Activated CD4-positive, alpha-beta T cell treated with anti-CD3 and anti-CD28 coated beads for 36 hours (primary cell): ENCODE measurements at regions of chr7 and their contacts with region 1.

Region 1: GRCh38 chr7:139602143-139602722 is 78.7 kb downstream of the CLEC2L start:
- DNase-seq: no peak
- ATAC-seq: peak; percentile 83
- H3K4me3 Mint-ChIP-seq: no peak overlapping the region
- H3K27ac Mint-ChIP-seq: no peak overlapping the region
- H3K4me1 Mint-ChIP-seq: no peaks in the 10 kb centered on the region
- H3K27me3 Mint-ChIP-seq: no peaks in the 10 kb centered on the region

Region 2: DNA sequence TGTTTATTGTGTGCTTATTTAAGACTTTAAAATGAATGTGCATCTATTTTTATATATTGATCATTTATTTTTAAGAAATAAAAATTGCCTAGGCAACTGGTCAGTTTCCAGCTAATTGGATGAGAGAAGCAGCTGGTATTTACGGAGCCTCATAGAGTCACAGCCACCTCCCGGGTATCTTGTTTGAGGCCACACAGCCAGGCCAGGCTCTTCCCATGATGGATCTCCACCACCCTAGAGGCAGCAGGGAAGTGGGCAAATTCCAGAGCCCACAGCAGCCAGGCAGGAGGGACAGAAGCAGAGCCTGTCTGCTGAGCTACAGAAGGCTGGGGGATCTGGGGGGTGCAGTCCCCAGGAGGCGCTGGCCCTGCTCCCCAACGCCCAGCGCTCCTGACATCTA is 17.2 kb before region 1 on chr7:
- CTCF ChIA-PET with region 1: interaction called, 10 read pairs
- POLR2A ChIA-PET with region 1: no interaction called
- intact Hi-C with region 1: no loop called
- DNase-seq: no peak
- ATAC-seq: no peak
- H3K4me3 Mint-ChIP-seq: no peak overlapping the region
- H3K27ac Mint-ChIP-seq: no peak overlapping the region
- H3K4me1 Mint-ChIP-seq: peaks cover 5% of the 10 kb centered on the region
- H3K27me3 Mint-ChIP-seq: no peaks in the 10 kb centered on the region

Region 3: GRCh38 chr7:139613971-139614411 is 11.8 kb after region 1 on chr7:
- CTCF ChIA-PET with region 1: interaction called, 56 read pairs
- POLR2A ChIA-PET with region 1: interaction called, 3 read pairs
- intact Hi-C with region 1: no loop called
- DNase-seq: no peak
- ATAC-seq: no peak
- H3K4me3 Mint-ChIP-seq: no peak overlapping the region
- H3K27ac Mint-ChIP-seq: no peak overlapping the region
- H3K4me1 Mint-ChIP-seq: no peaks in the 10 kb centered on the region
- H3K27me3 Mint-ChIP-seq: no peaks in the 10 kb centered on the region

Region 4: DNA sequence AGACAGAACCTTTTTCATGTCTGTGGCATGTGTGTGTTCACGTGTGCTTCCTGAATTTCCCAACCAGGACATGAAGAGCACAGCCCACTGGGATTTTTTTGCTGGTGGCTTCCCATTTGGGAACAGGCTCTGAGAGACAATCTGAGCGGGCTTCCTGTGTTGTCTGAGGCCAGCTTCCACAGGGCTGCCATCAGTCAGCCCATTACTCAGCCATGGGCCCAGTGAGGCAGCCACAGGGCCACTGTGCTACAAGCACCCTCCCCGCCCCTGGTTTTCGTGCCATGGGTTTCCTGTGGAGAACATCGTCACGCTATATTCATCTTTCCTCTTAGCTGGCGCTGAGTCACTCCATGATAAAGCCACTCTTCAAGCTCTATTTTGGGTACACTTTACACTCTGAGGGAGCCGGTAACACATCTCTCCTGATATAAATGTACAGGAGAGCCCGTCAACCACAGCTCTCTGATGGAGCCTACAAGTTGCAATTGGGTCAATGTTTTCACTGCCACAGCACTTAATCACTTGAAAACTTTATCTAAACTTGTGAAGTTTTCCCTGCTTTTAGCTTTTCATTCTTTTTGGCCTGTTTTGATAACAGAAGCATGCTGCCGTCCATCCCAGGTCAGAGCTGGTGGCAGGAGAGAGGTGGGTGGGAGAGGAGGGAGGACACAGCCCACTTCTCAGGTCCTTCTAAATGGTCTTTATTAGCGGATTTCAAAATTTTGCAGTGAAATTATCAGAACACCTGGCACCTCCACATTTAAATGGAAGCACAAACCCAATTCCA is 78.6 kb after region 1 on chr7:
- CTCF ChIA-PET with region 1: no interaction called
- POLR2A ChIA-PET with region 1: no interaction called
- intact Hi-C with region 1: no loop called
- DNase-seq: peak; percentile 94
- ATAC-seq: peak; percentile 73
- H3K4me3 Mint-ChIP-seq: peak overlapping the region; percentile 68
- H3K27ac Mint-ChIP-seq: peak overlapping the region; percentile 98
- H3K4me1 Mint-ChIP-seq: peaks cover 53% of the 10 kb centered on the region
- H3K27me3 Mint-ChIP-seq: no peaks in the 10 kb centered on the region

Region 5: DNA sequence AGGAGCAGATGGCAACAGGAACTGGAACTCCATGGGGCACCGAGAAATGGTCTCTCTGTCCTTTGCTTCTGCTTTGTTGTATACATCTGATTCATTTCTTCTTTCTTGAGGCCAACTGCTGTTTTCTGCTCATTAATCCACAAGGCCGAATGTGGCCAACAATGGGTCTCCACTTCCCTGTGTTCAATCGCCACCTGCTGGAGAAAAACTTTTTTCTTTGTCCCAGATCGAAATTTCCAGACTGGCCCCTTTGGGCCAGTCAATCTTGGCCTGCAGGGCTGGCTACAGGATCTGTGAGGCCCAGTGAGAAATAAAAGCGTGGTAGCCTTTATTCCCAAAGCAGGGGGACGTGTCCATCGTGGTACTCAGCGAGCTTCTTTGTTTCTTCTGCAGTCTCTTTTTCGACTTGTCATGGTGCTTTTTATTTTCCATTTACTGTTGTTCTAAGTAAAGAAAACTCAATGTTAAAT is 401.7 kb after region 1 on chr7:
- CTCF ChIA-PET with region 1: interaction called, 28 read pairs
- POLR2A ChIA-PET with region 1: no interaction called
- intact Hi-C with region 1: loop called (anchors 1 kb)
- DNase-seq: peak; percentile 53
- ATAC-seq: peak; percentile 16
- H3K4me3 Mint-ChIP-seq: no peak overlapping the region
- H3K27ac Mint-ChIP-seq: no peak overlapping the region
- H3K4me1 Mint-ChIP-seq: no peaks in the 10 kb centered on the region
- H3K27me3 Mint-ChIP-seq: no peaks in the 10 kb centered on the region